ENCODE measurements at regions of chr4 and their contacts with region 1.

Region 1: DNA sequence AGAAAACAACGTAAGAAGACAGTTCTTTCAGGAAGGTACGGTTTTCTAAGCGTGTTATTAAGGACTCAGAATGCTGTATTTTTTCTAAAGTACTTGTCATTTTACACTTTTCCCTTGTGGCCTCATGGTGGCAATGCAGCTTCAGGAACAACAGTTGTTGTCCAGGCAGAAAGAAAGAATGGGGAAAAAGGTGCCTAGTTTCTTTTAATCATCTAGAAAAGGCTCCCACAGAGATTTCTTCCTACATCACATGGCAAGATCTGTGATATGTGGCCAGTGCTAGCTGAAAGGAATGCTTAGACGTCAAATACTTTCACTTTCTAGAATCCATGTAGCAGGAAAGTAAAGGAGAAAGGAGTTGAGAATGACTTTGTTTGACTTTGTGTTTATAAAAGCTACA is 49.0 kb upstream of the TRAM1L1 start:
- DNase-seq: peak; percentile 67
- ATAC-seq: peak; percentile 81
- H3K4me3 ChIP-seq: 0 out of 4 replicates have a peak overlapping the region, but pooled peaks of 1 of the 2 experiments have one; percentile 4
- H3K27ac ChIP-seq: no peak overlapping the region
- H3K4me1 ChIP-seq: peaks cover 0 to 25% of the 10 kb centered on the region in 2 experiments; a peak in 2 of 4 replicates
- H3K27me3 ChIP-seq: no peaks in the 10 kb centered on the region
- CTCF ChIP-seq: peak; percentile 60 to 76 (median 73)
- POLR2A ChIP-seq: no peak
- RAD21 ChIP-seq: peak; percentile 91

Region 2: GRCh38 chr4:116358588-116359222 is 775.7 kb before region 1 on chr4:
- CTCF ChIA-PET with region 1: no interaction called
- POLR2A ChIA-PET with region 1: no interaction called
- RAD21 ChIA-PET with region 1: no interaction called
- intact Hi-C with region 1: loop called (anchors 5 kb)
- DNase-seq: peak; percentile 52
- ATAC-seq: peak; percentile 94
- H3K4me3 ChIP-seq: no peak overlapping the region
- H3K27ac ChIP-seq: no peak overlapping the region
- H3K4me1 ChIP-seq: no peaks in the 10 kb centered on the region
- H3K27me3 ChIP-seq: no peaks in the 10 kb centered on the region
- CTCF ChIP-seq: peak; percentile 12 to 74 (median 56); a peak in 4 of 6 replicates
- POLR2A ChIP-seq: no peak
- RAD21 ChIP-seq: peak; percentile 66

Region 3: GRCh38 chr4:117692538-117692937 is 558.2 kb after region 1 on chr4:
- CTCF ChIA-PET with region 1: no interaction called
- POLR2A ChIA-PET with region 1: no interaction called
- RAD21 ChIA-PET with region 1: interaction called in 1 of 2 experiments, 3 read pairs
- intact Hi-C with region 1: loop called (anchors 10 kb)
- DNase-seq: no peak
- ATAC-seq: peak; percentile 59
- H3K4me3 ChIP-seq: no peak overlapping the region
- H3K27ac ChIP-seq: no peak overlapping the region
- H3K4me1 ChIP-seq: no peaks in the 10 kb centered on the region
- H3K27me3 ChIP-seq: no peaks in the 10 kb centered on the region
- CTCF ChIP-seq: peak in 1 of 3 experiments; percentile 24; a peak in 1 of 6 replicates
- POLR2A ChIP-seq: no peak
- RAD21 ChIP-seq: peak; percentile 32

Region 4: DNA sequence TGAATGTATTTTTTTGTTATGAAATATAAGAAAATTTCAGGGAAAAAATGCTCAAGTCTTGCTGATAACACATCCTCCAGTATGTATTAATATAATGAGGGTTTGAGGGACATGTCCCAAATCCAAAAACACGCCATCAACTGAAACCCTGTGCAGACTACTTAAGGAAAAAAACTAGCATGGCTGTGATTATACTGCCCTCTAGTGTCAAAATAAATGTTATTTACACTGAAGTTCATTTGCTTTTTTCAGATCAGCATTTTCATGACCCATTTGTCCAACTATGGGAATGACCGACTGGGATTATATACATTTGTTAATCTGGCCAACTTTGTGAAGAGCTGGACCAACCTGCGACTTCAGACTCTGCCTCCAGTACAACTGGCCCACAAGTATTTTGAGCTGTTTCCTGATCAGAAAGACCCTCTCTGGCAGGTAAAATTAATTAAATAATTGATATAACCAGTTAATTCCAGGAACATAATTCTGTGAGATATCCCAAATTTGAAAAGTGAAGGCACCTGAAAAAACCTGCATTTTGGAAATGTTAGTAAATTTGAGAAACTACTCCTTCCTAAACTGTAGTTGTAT is 1089.9 kb after region 1 on chr4:
- CTCF ChIA-PET with region 1: interaction called, 3 read pairs
- POLR2A ChIA-PET with region 1: no interaction called
- RAD21 ChIA-PET with region 1: no interaction called
- intact Hi-C with region 1: loop called (anchors 2 kb)
- DNase-seq: peak; percentile 67
- ATAC-seq: peak; percentile 80
- H3K4me3 ChIP-seq: no peak overlapping the region
- H3K27ac ChIP-seq: no peak overlapping the region
- H3K4me1 ChIP-seq: no peaks in the 10 kb centered on the region
- H3K27me3 ChIP-seq: no peaks in the 10 kb centered on the region
- CTCF ChIP-seq: peak; percentile 31 to 78 (median 65); a peak in 5 of 6 replicates
- POLR2A ChIP-seq: no peak
- RAD21 ChIP-seq: peak; percentile 83